Activated T-helper 2 cell treated with anti-CD3 and anti-CD28 coated beads, Interferon-gamma antibody, Interleukin-2, Interleukin-4, amounts not matched to agents 10 μg/mL and 5 μg/mL and 100 μg/mL, durations not matched to agents 14 hours and 24 hours and 36 hours (primary cell): ENCODE measurements at regions of chr6 and their contacts with region 1.

Region 1: GRCh38 chr6:17156112-17156921 is 54.5 kb downstream of the STMND1 start:
- DNase-seq: peak; percentile 10
- H3K4me3 Mint-ChIP-seq: no peak overlapping the region
- H3K27ac Mint-ChIP-seq: no peak overlapping the region
- H3K4me1 Mint-ChIP-seq: no peaks in the 10 kb centered on the region
- H3K27me3 Mint-ChIP-seq: peaks cover 3% of the 10 kb centered on the region

Region 2: DNA sequence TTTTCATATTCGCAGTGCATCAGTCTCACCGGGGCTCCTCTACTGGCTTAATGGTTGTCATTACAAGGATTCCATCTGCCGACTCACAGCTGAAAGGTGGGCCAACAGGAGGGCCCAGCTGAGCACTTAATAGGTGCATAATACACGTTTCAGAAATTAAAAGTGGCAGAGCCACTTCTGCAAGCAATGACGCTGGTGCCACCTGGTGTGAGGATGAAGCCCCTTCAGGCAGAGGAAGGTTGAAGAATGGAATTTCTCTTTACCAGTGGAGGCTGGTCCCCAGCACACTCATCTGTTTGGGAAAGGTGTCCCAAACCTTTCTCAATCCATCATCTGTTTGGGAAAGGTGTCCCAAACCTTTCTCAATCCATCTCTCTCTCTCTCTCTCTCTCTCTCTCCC is 62.6 kb before region 1 on chr6:
- intact Hi-C with region 1: no loop called
- DNase-seq: no peak
- H3K4me3 Mint-ChIP-seq: no peak overlapping the region
- H3K27ac Mint-ChIP-seq: no peak overlapping the region
- H3K4me1 Mint-ChIP-seq: no peaks in the 10 kb centered on the region
- H3K27me3 Mint-ChIP-seq: peaks cover 8% of the 10 kb centered on the region

Region 3: DNA sequence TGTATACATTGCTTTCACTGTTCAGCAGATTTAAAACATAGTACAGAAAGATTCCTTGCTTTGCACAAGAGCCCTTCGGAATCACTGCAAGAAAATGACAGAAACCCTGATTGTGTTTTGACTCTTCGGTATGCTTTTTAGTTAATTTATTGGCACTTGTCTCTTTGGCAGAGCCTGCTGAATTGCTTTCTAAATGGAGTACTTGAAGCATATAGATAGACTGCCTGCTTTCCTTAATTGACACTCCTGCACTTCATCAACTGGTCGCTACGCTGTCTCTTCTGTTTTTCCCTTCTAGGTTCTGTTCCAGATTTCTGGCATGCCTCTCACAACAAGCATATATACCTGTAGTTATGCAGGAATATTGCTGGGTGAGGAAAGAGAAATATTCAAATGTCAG is 102.4 kb after region 1 on chr6:
- intact Hi-C with region 1: no loop called
- DNase-seq: no peak
- H3K4me3 Mint-ChIP-seq: no peak overlapping the region
- H3K27ac Mint-ChIP-seq: no peak overlapping the region
- H3K4me1 Mint-ChIP-seq: no peaks in the 10 kb centered on the region
- H3K27me3 Mint-ChIP-seq: peaks cover 5% of the 10 kb centered on the region

Region 4: GRCh38 chr6:17584241-17584803 is 428.0 kb after region 1 on chr6:
- intact Hi-C with region 1: loop called (anchors 1 kb)
- DNase-seq: no peak
- H3K4me3 Mint-ChIP-seq: no peak overlapping the region
- H3K27ac Mint-ChIP-seq: no peak overlapping the region
- H3K4me1 Mint-ChIP-seq: peaks cover 10% of the 10 kb centered on the region
- H3K27me3 Mint-ChIP-seq: peaks cover 9% of the 10 kb centered on the region

Region 5: DNA sequence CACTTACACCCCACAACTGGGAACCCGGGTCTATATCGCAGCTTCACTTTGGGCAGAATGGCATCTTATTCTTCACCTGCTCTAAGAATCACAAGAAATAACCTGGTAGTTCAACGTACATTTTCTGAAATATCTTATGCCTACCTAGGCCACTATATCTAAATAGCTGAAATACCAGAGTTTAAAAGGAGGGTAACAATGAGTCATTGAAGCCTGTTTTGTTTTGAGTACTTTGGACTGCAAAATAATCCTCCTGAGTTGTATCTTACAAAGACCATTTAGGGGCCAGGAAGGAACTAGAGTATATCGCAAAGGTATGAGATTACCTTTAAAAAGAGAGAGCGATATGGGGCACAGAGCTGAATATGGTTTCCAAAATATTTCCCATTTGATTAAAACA is 647.1 kb after region 1 on chr6:
- intact Hi-C with region 1: loop called (anchors 5 kb)
- DNase-seq: no peak
- H3K4me3 Mint-ChIP-seq: no peak overlapping the region
- H3K27ac Mint-ChIP-seq: no peak overlapping the region
- H3K4me1 Mint-ChIP-seq: no peaks in the 10 kb centered on the region
- H3K27me3 Mint-ChIP-seq: peaks cover 20% of the 10 kb centered on the region

Region 6: DNA sequence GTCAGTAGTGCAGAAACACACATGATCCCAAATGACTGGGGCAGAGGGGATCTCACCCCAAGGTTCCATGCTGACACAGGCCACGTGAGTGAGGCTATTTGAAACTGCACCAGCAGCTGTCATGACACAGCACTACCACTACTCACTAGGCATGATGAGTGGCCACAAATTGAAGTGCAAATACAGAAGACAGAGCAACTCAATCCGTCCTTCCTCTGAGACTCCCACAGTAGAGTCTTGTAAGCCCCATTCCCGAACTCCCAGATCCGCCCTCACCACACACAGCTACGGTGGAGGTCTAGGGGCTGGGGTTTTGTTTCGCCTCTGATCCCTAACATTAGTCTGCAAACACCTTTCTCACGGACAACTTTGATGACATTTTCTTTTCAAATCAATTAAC is 663.7 kb after region 1 on chr6:
- intact Hi-C with region 1: loop called (anchors 1 kb)
- DNase-seq: no peak
- H3K4me3 Mint-ChIP-seq: no peak overlapping the region
- H3K27ac Mint-ChIP-seq: no peak overlapping the region
- H3K4me1 Mint-ChIP-seq: no peaks in the 10 kb centered on the region
- H3K27me3 Mint-ChIP-seq: peaks cover 4% of the 10 kb centered on the region